SK-N-SH (cell line): ENCODE measurements at regions of chr19 and their contacts with region 1.

Region 1: DNA sequence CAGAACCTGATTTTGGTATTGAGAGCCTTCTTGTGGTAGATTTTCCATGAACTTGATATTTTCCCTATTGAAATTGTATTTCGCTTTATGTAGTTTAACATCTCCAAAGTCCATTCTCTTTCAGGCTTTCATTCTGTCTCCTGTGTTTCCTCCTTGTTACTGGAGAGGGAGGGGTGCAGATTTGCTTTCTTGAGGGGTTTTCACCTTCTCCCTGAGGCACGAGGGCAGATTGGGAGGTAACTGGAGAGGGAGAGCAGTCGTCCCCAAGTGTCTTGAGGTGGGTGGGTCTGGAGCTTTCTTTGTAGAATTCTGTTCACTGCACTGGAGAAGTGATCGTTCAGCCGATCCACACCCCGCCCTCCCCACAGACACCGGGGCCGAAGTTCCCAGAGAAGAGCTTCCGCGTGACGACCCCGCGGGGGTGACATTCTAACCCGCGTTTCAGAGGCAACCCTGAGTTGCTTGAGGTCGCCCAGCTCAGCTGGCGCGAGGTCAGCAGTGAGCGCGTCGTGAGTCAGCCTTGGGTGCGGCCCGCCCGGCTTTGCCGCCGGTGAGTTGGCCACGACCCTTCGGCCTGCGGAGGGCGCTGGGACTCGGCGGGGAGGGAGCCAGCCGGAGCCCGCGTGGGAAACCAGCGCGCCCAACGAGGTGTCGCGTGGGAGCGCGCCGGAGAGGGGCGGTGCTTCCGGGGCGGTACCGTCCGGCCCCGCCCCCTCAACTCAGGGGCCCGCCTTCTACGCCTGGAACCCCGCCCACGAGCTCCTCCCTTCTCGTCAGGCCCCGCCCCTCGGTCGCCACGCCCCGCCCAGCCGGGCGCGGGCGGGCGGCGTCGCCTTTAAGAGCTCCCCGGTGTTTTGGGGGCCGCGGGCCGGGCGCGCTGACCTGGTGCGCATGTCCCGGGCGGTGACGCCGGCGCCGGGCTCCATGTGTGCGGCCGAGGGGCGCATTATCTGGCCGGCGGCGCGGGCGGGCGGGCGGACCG is at the start of gene GATAD2A:
- DNase-seq: peak; percentile 98
- H3K4me3 ChIP-seq: peak within 1 kb of the TSS; percentile 86 to 97
- H3K27ac ChIP-seq: peak within 1 kb of the TSS; percentile 70 to 89
- H3K4me1 ChIP-seq: peaks cover 22 to 24% of the 10 kb centered on the region in 2 experiments; a peak in 3 of 4 replicates
- H3K27me3 ChIP-seq: no peaks in the 10 kb centered on the region
- CTCF ChIP-seq: peak; percentile 29; the same call in 1 of the 2 replicates
- EP300 ChIP-seq: no peak
- RAD21 ChIP-seq: 0 out of 2 replicates have a peak, but pooled peaks have one; percentile 16
- polyA plus RNA-seq, gene GATAD2A: 28.0 and 36.6 TPM in 2 replicates

Region 2: GRCh38 chr19:19366612-19367396 is 38.4 kb before region 1 on chr19:
- CTCF ChIA-PET with region 1: interaction called, 12 read pairs
- POLR2A ChIA-PET with region 1: no interaction called
- DNase-seq: peak; percentile 79
- H3K4me3 ChIP-seq: no peak overlapping the region
- H3K27ac ChIP-seq: no peak overlapping the region
- H3K4me1 ChIP-seq: peaks cover 0 to 3% of the 10 kb centered on the region in 2 experiments; a peak in 1 of 4 replicates
- H3K27me3 ChIP-seq: no peaks in the 10 kb centered on the region
- CTCF ChIP-seq: peak; percentile 88
- EP300 ChIP-seq: no peak
- RAD21 ChIP-seq: peak; percentile 78

Region 3: DNA sequence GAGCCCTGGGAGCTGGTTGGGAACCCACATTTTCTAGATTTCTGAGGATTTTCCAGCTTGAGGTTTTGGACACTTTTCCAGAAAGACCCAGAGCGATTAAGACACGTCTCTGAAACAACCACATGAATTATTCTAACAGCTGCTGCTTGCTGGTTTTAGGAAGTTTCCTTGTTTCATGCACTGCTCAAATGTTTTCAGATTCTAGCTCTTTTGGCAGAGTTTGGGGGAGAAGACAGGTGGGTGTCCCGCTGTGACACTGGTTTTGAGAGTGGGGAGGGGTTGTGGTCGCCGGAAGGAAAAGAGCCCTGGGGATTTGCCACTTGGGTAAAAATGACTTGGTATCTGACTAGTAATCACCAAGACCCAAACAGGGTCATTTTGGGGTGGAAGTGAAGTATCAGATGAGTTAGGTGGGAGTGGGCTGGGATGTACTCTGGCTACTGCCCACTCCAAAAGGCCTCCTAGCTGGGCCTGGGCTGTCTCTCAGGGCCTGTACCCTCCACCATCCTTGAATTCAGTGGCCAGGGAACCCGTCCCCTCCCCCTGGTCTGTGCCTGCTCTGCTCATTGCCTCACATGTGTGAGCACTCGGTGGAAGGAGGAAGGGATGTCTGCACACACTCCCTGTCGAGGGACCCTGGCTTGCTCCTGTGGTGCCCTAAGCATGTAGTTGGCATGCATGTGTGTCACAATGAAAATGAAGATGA is 13.5 kb after region 1 on chr19:
- CTCF ChIA-PET with region 1: interaction called, 15 read pairs
- POLR2A ChIA-PET with region 1: interaction called, 5 read pairs
- DNase-seq: no peak
- H3K4me3 ChIP-seq: no peak overlapping the region
- H3K27ac ChIP-seq: no peak overlapping the region
- H3K4me1 ChIP-seq: peaks cover 0 to 8% of the 10 kb centered on the region in 2 experiments; a peak in 1 of 4 replicates
- H3K27me3 ChIP-seq: no peaks in the 10 kb centered on the region
- CTCF ChIP-seq: no peak
- EP300 ChIP-seq: no peak
- RAD21 ChIP-seq: no peak